Posterior cingulate gyrus (tissue), 11 donors: ENCODE measurements at regions of chr17 and their contacts with region 1.

Region 1: GRCh38 chr17:77208217-77208808 is 67.5 kb downstream of the SEC14L1 start:
- DNase-seq: peak in 5 of 10 donors; percentile 39 to 89 (median 49)

Region 2: DNA sequence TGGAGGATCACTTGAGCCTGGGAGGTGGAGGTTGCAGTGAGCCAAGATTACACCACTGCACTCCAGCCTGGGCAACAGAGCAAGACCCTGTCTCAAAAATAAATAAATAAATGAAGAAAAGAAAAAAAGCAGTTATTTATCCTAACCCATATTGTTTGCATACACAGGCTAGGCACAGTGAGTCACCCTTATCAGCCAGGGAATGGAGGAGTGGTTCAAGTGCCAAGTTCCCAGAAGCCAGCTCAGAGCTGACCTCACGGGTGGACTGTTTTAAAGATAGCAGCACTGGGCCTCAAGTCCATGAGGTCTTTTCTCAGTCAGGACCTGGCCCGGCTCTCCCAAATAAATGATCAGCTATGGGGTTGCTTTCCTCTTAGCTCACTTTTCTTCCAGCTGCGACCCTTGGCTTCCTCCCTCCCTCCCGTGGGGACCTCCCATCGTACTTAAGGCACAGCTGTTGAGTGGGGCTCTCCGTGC is 362.7 kb before region 1 on chr17:
- intact Hi-C with region 1: no loop called
- DNase-seq: no peak

Region 3: GRCh38 chr17:77164483-77165091 is 43.7 kb before region 1 on chr17:
- intact Hi-C with region 1: loop called (anchors 5 kb)
- DNase-seq: no peak